ENCODE measurements at regions of chr3 and their contacts with region 1.

Region 1: GRCh38 chr3:102229062-102229655 is 205.7 kb upstream of the ZPLD1 start:
- DNase-seq: peak; percentile 89
- H3K4me3 ChIP-seq: no peak overlapping the region
- H3K27ac ChIP-seq: no peak overlapping the region
- H3K4me1 ChIP-seq: peaks cover 4% of the 10 kb centered on the region
- H3K27me3 ChIP-seq: no peaks in the 10 kb centered on the region
- CTCF ChIP-seq: peak; percentile 86 to 95 (median 94)
- POLR2A ChIP-seq: no peak

Region 2: DNA sequence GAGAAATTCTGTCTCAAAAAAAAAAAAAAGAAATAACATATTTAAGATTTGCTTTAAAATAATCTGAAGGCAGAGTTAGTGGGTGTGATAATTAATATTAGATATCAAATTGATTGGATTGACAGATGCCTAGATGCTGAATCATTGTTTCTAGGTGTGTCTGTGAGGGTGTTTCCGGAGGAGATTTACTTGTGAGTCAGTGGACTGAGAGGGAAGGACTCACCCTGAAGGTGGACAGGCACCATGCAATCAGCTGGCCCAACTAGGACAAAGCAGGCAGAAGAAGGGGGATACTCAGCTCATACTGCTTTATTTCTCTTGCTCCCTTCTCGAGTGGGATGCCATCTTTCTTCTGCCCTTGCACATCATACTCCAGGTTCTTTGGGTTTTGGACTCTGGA is 526.0 kb before region 1 on chr3:
- intact Hi-C with region 1: loop called (anchors 10 kb)
- DNase-seq: no peak
- H3K4me3 ChIP-seq: no peak overlapping the region
- H3K27ac ChIP-seq: no peak overlapping the region
- H3K4me1 ChIP-seq: no peaks in the 10 kb centered on the region
- H3K27me3 ChIP-seq: no peaks in the 10 kb centered on the region
- CTCF ChIP-seq: no peak
- POLR2A ChIP-seq: no peak

Region 3: DNA sequence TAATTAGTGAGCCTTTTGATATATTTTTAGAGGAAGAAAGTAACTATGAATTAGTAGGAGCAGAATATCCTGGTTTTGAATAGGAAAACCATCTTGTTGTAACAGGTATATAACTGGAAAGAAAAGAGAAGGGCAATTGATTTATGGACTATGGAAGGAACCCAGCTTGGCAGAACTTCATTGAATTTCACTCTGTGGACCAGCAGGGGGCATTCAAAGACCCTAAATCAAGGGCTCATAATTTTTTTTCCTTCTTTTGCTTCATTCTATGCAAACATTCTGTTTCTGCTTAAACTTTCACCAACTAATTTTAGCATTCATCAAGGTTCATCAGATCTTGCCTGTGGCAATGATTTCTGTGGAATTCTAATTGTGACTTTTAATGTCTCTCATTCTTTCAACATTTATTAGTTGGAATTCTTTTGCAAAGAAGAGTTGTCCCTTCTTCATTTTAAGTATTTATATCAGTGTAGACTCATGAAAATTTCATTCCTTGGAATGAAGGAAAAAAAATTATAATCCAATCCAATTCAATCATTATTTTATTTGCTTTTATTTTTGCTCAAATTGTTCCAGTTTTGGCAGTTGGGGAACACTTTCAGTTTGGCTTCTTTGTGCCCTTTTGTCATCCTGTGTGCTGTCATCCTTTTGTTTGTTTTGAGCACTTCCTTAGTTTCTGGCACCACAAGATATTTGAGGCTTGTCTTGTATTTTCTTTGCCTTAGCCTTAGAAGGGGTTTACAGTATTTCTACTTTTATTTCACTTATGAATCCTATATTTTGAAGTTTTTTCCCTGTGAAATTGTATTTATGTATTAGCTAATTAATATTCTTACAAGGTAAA is 419.8 kb before region 1 on chr3:
- intact Hi-C with region 1: loop called (anchors 10 kb)
- DNase-seq: peak; percentile 18
- H3K4me3 ChIP-seq: no peak overlapping the region
- H3K27ac ChIP-seq: no peak overlapping the region
- H3K4me1 ChIP-seq: no peaks in the 10 kb centered on the region
- H3K27me3 ChIP-seq: no peaks in the 10 kb centered on the region
- CTCF ChIP-seq: peak; percentile 20 to 50 (median 42)
- POLR2A ChIP-seq: no peak

Region 4: DNA sequence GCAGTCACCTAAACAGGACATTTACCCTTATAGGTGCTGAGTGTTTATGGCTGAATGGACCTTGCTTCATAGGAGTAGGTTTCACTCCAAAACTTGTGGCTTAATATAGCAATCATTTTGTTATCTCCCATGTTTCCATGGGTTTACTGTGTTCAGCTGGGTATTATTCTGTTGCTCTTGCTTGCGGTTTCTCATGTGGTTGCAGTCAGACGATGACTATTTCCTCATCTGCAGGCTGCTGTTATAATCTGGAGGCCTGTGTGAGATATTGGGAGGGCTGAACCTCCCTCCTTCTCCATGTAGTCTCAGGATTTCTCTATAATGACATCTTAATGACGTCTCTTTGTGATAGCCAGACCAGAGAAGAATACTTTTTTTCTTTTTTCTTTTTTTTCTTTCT is 303.7 kb after region 1 on chr3:
- intact Hi-C with region 1: loop called (anchors 5 kb)
- DNase-seq: no peak
- H3K4me3 ChIP-seq: no peak overlapping the region
- H3K27ac ChIP-seq: no peak overlapping the region
- H3K4me1 ChIP-seq: peaks cover 4% of the 10 kb centered on the region
- H3K27me3 ChIP-seq: no peaks in the 10 kb centered on the region
- CTCF ChIP-seq: no peak
- POLR2A ChIP-seq: no peak

Region 5: GRCh38 chr3:102699819-102700140 is 470.6 kb after region 1 on chr3:
- intact Hi-C with region 1: no loop called
- DNase-seq: no peak
- H3K4me3 ChIP-seq: no peak overlapping the region
- H3K27ac ChIP-seq: no peak overlapping the region
- H3K4me1 ChIP-seq: no peaks in the 10 kb centered on the region
- H3K27me3 ChIP-seq: no peaks in the 10 kb centered on the region
- CTCF ChIP-seq: no peak
- POLR2A ChIP-seq: no peak